ENCODE measurements at regions of chr18 and their contacts with region 1.

Region 1: DNA sequence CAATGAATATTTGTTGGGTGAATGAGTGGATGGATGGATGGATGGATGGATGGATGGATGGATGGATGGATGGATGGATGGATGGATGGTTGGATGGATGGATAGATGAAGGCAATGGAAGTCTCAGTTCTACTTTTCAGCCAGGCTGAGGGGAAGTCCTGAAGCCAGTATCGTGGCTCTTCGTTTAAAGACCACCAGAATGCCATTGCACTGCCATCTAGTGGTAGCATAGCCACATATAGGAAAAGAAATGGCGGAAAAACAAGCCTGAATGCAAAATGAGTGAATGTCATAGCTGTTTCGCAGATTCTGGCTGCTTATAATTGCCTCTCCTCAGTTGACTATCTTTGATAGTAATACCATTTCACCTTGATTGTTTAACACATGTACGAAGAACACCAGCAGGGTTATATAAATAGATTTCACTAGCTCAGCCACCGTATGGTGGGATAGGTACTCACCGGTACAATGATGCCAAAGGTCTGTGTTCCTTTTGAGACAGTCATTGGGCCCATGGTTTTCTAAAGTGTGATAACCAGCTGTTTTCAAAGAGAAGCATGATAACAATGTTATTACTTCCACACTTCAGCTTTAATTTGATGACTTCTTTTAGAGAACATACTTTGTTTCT is 62.3 kb upstream of the GREB1L start:
- DNase-seq: no peak
- ATAC-seq: peak; percentile 73; the same call in 1 of the 2 replicates
- H3K4me3 ChIP-seq: no peak overlapping the region
- H3K27ac ChIP-seq: no peak overlapping the region
- H3K4me1 ChIP-seq: no peaks in the 10 kb centered on the region
- H3K27me3 ChIP-seq: no peaks in the 10 kb centered on the region
- CTCF ChIP-seq: peak; percentile 81

Region 2: GRCh38 chr18:21004726-21005125 is 175.0 kb before region 1 on chr18:
- CTCF ChIA-PET with region 1: no interaction called
- POLR2A ChIA-PET with region 1: no interaction called
- in situ Hi-C with region 1: no loop called
- intact Hi-C with region 1: loop called (anchors 10 kb)
- DNase-seq: no peak
- ATAC-seq: no peak
- H3K4me3 ChIP-seq: no peak overlapping the region
- H3K27ac ChIP-seq: no peak overlapping the region
- H3K4me1 ChIP-seq: no peaks in the 10 kb centered on the region
- H3K27me3 ChIP-seq: no peaks in the 10 kb centered on the region
- CTCF ChIP-seq: no peak

Region 3: GRCh38 chr18:21038201-21038600 is 141.5 kb before region 1 on chr18:
- CTCF ChIA-PET with region 1: no interaction called
- POLR2A ChIA-PET with region 1: no interaction called
- in situ Hi-C with region 1: no loop called
- intact Hi-C with region 1: loop called (anchors 10 kb)
- DNase-seq: no peak
- ATAC-seq: no peak
- H3K4me3 ChIP-seq: no peak overlapping the region
- H3K27ac ChIP-seq: no peak overlapping the region
- H3K4me1 ChIP-seq: no peaks in the 10 kb centered on the region
- H3K27me3 ChIP-seq: no peaks in the 10 kb centered on the region
- CTCF ChIP-seq: no peak

Region 4: GRCh38 chr18:21064347-21064746 is 115.4 kb before region 1 on chr18:
- CTCF ChIA-PET with region 1: no interaction called
- POLR2A ChIA-PET with region 1: no interaction called
- in situ Hi-C with region 1: no loop called
- intact Hi-C with region 1: no loop called
- DNase-seq: no peak
- ATAC-seq: no peak
- H3K4me3 ChIP-seq: no peak overlapping the region
- H3K27ac ChIP-seq: no peak overlapping the region
- H3K4me1 ChIP-seq: no peaks in the 10 kb centered on the region
- H3K27me3 ChIP-seq: no peaks in the 10 kb centered on the region
- CTCF ChIP-seq: no peak

Region 5: GRCh38 chr18:21111341-21112139 is 68.2 kb before region 1 on chr18 and contains the start of gene ROCK1:
- CTCF ChIA-PET with region 1: interaction called, 3 read pairs
- POLR2A ChIA-PET with region 1: no interaction called
- in situ Hi-C with region 1: no loop called
- intact Hi-C with region 1: loop called (anchors 10 kb)
- DNase-seq: peak; percentile 59
- ATAC-seq: peak; percentile 97
- H3K4me3 ChIP-seq: peak within 1 kb of the TSS; percentile 88 to 91
- H3K27ac ChIP-seq: peak within 1 kb of the TSS; percentile 87
- H3K4me1 ChIP-seq: peaks cover 6% of the 10 kb centered on the region
- H3K27me3 ChIP-seq: no peaks in the 10 kb centered on the region
- CTCF ChIP-seq: no peak
- total RNA-seq, gene ROCK1: 36.2 TPM

Region 6: DNA sequence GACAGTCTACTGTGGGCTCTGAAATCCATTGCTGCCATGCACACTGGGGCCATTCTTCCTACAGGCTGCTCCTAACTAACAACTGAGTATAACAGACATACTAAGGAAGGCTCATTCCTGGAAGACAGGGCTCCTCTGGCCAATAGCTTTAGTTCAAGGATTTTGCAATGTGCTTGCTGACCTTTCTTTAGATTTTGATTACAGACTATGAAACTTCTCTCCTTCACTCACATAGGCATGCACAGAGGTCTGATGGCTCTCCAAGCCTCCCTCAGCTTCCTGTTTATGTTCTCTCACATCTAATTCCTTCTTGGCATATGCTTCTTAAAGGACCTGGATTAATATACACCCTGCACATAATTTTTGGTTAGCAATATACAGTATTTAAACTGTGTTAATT is 33.7 kb before region 1 on chr18:
- CTCF ChIA-PET with region 1: no interaction called
- POLR2A ChIA-PET with region 1: interaction called, 11 read pairs
- in situ Hi-C with region 1: no loop called
- intact Hi-C with region 1: no loop called
- DNase-seq: no peak
- ATAC-seq: no peak
- H3K4me3 ChIP-seq: no peak overlapping the region
- H3K27ac ChIP-seq: no peak overlapping the region
- H3K4me1 ChIP-seq: no peaks in the 10 kb centered on the region
- H3K27me3 ChIP-seq: no peaks in the 10 kb centered on the region
- CTCF ChIP-seq: no peak

Region 7: GRCh38 chr18:21257386-21257785 is 77.7 kb after region 1 on chr18:
- CTCF ChIA-PET with region 1: no interaction called
- POLR2A ChIA-PET with region 1: no interaction called
- in situ Hi-C with region 1: no loop called
- intact Hi-C with region 1: no loop called
- DNase-seq: no peak
- ATAC-seq: no peak
- H3K4me3 ChIP-seq: no peak overlapping the region
- H3K27ac ChIP-seq: no peak overlapping the region
- H3K4me1 ChIP-seq: peaks cover 3% of the 10 kb centered on the region; the same call in 1 of the 2 replicates
- H3K27me3 ChIP-seq: no peaks in the 10 kb centered on the region
- CTCF ChIP-seq: no peak

Region 8: GRCh38 chr18:21361307-21361880 is 181.7 kb after region 1 on chr18:
- CTCF ChIA-PET with region 1: no interaction called
- POLR2A ChIA-PET with region 1: no interaction called
- in situ Hi-C with region 1: no loop called
- intact Hi-C with region 1: no loop called
- DNase-seq: no peak
- ATAC-seq: no peak; the same call in 1 of the 2 replicates
- H3K4me3 ChIP-seq: no peak overlapping the region
- H3K27ac ChIP-seq: no peak overlapping the region
- H3K4me1 ChIP-seq: peaks cover 10% of the 10 kb centered on the region; the same call in 1 of the 2 replicates
- H3K27me3 ChIP-seq: no peaks in the 10 kb centered on the region
- CTCF ChIP-seq: no peak